K562 (cell line): ENCODE measurements at regions of chr6 and their contacts with region 1.

Region 1: DNA sequence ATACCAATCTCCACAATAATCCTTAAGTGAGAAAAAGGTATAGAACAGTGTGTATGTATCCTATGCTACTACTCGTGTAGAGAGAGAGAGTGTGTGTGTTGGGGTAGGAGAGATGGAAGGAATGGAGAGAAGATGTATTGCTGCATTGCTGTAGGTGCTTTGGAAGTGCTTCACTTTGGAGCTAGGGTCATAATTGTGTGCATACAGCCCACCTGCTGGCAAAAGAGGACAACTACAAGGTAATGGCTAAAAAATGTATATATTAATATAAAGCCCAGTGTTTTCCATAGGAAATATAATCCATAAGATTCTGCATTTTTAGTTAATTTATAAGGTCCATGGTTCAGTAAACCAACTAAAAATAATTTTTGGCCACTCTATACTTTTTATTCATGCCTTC is 36.1 kb downstream of the SERAC1 start:
- DNase-seq: peak; percentile 31 to 66 (median 54)
- ATAC-seq: peak; percentile 96
- H3K4me3 ChIP-seq: no peak overlapping the region
- H3K27ac ChIP-seq: no peak overlapping the region
- H3K4me1 ChIP-seq: no peaks in the 10 kb centered on the region
- H3K27me3 ChIP-seq: no peaks in the 10 kb centered on the region; a peak in 1 of 5 replicates
- CTCF ChIP-seq: peak; percentile 69 to 86 (median 75)
- EP300 ChIP-seq: no peak
- POLR2A ChIP-seq: no peak
- RAD21 ChIP-seq: peak; percentile 67 to 83

Region 2: DNA sequence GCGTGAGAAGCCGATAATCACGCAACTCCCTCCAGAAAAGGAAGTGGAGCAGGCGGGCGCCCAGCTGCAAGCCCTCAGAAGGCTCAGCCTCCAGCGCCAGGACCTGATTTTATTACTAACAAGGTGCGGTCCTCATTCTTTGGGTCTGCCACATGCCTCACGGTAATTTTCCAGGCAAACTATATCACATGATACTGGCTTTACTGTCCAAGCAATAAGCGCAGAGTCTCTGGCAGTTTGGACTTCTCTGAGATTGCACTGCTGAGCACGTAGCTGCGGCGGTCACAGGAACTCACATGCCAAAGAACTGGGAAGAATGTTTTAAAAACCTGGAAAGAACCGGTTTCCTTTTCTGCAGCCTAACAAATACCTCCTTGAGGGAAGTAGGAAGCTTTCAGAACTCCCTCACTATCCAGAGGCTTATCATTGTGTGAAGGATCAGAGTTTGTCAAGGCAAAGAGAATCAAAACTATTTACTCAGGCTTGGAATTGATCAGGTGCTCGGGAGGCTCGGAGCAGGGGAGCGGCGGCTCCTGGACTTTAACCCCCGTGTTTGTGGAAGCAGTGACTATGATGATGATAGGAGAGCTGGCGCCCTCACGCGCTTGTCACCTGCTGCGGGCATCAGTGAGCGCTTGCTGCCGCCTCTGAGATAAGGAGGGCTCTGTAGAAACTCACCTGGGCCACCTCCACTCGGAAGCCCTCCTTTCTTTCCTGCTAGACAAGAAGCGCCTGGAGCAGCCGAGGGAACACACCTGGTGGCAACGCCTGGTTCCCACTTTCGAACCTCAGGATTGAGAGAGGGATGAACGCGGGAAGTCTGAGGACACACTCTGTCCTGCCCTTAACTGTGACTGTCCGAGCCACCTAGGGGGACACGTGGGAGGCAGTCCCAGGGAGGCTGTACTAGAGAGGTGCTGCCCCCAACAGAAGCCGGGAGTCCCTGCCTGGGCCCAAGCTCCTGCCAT is 177.5 kb before region 1 on chr6:
- CTCF ChIA-PET with region 1: no interaction called
- POLR2A ChIA-PET with region 1: no interaction called
- in situ Hi-C with region 1: no loop called
- intact Hi-C with region 1: loop called (anchors 5 kb)
- DNase-seq: no peak
- ATAC-seq: peak; percentile 74
- H3K4me3 ChIP-seq: no peak overlapping the region
- H3K27ac ChIP-seq: no peak overlapping the region
- H3K4me1 ChIP-seq: peaks cover 6 to 13% of the 10 kb centered on the region in 2 experiments; a peak in 4 of 5 replicates
- H3K27me3 ChIP-seq: peaks cover 9 to 24% of the 10 kb centered on the region in 2 experiments; a peak in 3 of 5 replicates
- CTCF ChIP-seq: peak in 2 of 3 experiments; percentile 6 to 18; a peak in 2 of 6 replicates
- EP300 ChIP-seq: no peak
- POLR2A ChIP-seq: no peak
- RAD21 ChIP-seq: peak in 1 of 2 experiments; percentile 36; a peak in 1 of 4 replicates

Region 3: GRCh38 chr6:158121335-158121734 is 10.6 kb before region 1 on chr6:
- CTCF ChIA-PET with region 1: no interaction called
- POLR2A ChIA-PET with region 1: no interaction called
- in situ Hi-C with region 1: no loop called
- intact Hi-C with region 1: no loop called
- DNase-seq: peak; percentile 30 to 66 (median 53)
- ATAC-seq: peak; percentile 81
- H3K4me3 ChIP-seq: no peak overlapping the region
- H3K27ac ChIP-seq: peak overlapping the region; percentile 45; the same call in 1 of the 3 replicates
- H3K4me1 ChIP-seq: peaks cover 0 to 5% of the 10 kb centered on the region in 2 experiments; a peak in 3 of 5 replicates
- H3K27me3 ChIP-seq: no peaks in the 10 kb centered on the region
- CTCF ChIP-seq: no peak
- EP300 ChIP-seq: no peak
- POLR2A ChIP-seq: no peak
- RAD21 ChIP-seq: no peak

Region 4: DNA sequence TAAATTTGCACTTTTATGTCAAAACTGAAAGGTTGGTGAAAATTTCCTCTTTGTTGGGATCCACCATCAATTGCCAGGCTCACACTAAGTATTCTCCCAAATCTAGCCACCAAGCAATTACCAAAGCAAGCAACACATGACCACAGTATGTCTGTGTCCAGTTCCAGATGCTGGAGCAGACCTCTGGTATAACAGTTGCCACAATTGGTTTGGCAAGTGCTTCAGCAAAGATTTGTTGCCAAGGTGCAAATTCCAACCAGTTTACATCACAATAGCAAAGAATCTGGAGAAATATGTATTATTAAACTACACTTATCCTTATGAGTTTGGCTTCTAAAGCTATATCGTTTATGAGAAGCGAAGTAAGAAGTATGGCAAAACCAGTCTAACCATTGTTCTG is 42.6 kb after region 1 on chr6:
- CTCF ChIA-PET with region 1: no interaction called
- POLR2A ChIA-PET with region 1: no interaction called
- in situ Hi-C with region 1: no loop called
- intact Hi-C with region 1: no loop called
- DNase-seq: no peak
- ATAC-seq: no peak
- H3K4me3 ChIP-seq: no peak overlapping the region
- H3K27ac ChIP-seq: no peak overlapping the region
- H3K4me1 ChIP-seq: no peaks in the 10 kb centered on the region
- H3K27me3 ChIP-seq: no peaks in the 10 kb centered on the region
- CTCF ChIP-seq: no peak
- EP300 ChIP-seq: no peak
- POLR2A ChIP-seq: no peak
- RAD21 ChIP-seq: no peak